Naive thymus-derived CD4-positive, alpha-beta T cell (primary cell): ENCODE measurements at regions of chr1 and their contacts with region 1.

Region 1: DNA sequence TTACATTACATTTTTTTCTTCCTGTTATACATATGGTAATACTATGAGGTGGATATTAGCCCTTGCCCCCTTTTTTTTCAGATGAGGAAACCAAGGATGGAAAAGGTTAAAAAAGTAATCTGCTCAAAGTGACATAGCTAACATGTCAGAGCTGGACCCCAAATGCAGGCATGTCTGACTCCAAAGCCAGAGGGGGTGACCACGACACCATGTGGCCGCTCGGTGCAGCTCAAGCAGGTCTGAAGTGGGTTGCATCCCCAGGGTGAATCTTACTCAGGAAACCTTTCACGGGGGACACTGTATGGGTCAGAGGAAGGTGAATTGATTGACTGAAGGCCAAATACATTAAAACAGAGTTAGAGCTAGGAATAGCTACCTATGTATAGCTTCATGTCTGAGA is 34.8 kb downstream of the CD34 start:
- DNase-seq: no peak
- ATAC-seq: no peak
- H3K4me3 ChIP-seq: no peak overlapping the region
- H3K4me3 Mint-ChIP-seq: peak overlapping the region in 2 of 10 donors; percentile 16 to 39
- H3K27ac ChIP-seq: no peak overlapping the region
- H3K27ac Mint-ChIP-seq: peak overlapping the region in 7 of 9 donors; percentile 29 to 93 (median 69)
- H3K4me1 ChIP-seq: peaks cover 20 to 38% of the 10 kb centered on the region in 2 donors
- H3K4me1 Mint-ChIP-seq: peaks cover 48 to 62% (median 57%) of the 10 kb centered on the region in 7 donors
- H3K27me3 ChIP-seq: no peaks in the 10 kb centered on the region
- H3K27me3 Mint-ChIP-seq: no peaks in the 10 kb centered on the region

Region 2: GRCh38 chr1:207863893-207864535 is 12.1 kb before region 1 on chr1:
- CTCF ChIA-PET with region 1: interaction called, 197 read pairs
- POLR2A ChIA-PET with region 1: interaction called, 17 read pairs
- intact Hi-C with region 1: no loop called
- DNase-seq: peak in 7 of 9 donors; percentile 35 to 62 (median 59)
- ATAC-seq: peak; percentile 69
- H3K4me3 ChIP-seq: peak overlapping the region; percentile 2
- H3K4me3 Mint-ChIP-seq: peak overlapping the region in 9 of 10 donors; percentile 35 to 95 (median 67)
- H3K27ac ChIP-seq: peak overlapping the region; percentile 78
- H3K27ac Mint-ChIP-seq: peak overlapping the region in 8 of 9 donors; percentile 71 to 97 (median 90)
- H3K4me1 ChIP-seq: peaks cover 60 to 74% of the 10 kb centered on the region in 2 donors
- H3K4me1 Mint-ChIP-seq: peaks cover 3 to 67% (median 56%) of the 10 kb centered on the region in 7 donors
- H3K27me3 ChIP-seq: no peaks in the 10 kb centered on the region
- H3K27me3 Mint-ChIP-seq: no peaks in the 10 kb centered on the region